Posterior vena cava (tissue), 2 donors: ENCODE measurements at regions of chr19 and their contacts with region 1.

Region 1: DNA sequence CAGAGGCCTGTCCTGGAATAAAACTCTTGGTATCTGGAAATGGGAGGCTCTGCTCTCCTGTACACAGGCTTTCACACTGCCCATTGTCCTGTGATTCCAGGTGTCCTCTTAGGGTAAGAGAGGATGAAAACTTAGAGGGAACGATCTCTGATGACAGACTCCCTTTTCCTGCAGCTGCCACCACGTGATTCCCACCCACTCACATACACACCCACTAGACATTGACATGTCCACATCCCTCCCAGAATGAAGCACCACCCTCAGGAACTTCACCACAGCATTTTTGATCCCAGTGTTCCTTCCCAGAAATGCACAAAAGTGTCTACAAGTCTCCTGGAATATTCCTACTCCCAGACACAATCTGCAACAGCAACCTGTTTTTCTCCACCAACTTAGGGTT is 8.2 kb downstream of the ZNF429 start:
- DNase-seq: no peak

Region 2: DNA sequence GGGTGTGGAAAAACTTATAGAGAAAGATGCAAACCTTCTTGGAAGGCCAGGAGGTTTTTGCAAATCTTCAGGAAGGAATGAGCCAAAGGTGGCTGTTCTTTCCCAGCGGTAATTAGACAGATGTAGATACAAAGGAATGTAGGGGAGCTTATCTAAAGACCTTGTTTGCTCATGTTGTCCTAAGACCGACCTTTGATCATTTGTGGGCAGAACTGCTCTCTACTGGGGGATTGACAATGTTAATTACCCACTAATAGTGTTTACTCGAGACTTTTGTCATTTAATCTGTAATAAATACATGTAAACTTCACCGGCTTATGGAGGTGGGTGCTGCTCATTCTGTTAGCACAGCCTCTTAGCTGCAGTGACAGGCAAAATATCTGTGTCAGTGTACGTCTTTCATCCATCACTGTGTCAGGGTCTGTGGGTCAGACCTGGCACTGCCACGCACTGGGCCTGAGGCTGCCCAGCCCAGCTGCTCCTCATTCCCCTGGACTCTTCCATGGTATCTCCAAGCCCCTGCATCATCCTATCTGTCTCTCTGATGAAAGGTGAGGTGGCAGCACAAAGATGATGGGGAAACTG is 303.5 kb before region 1 on chr19:
- intact Hi-C with region 1: no loop called
- DNase-seq: no peak

Region 3: GRCh38 chr19:21559444-21559843 is 45.8 kb after region 1 on chr19:
- intact Hi-C with region 1: loop called in 1 of 2 experiments (anchors 2 kb)
- DNase-seq: no peak

Region 4: GRCh38 chr19:21751379-21751778 is 237.7 kb after region 1 on chr19:
- intact Hi-C with region 1: no loop called
- DNase-seq: no peak

Region 5: GRCh38 chr19:22052644-22053013 is 539.0 kb after region 1 on chr19:
- intact Hi-C with region 1: no loop called
- DNase-seq: no peak